CD8-positive, alpha-beta T cell (primary cell): ENCODE measurements at regions of chr19 and their contacts with region 1.

Region 1: DNA sequence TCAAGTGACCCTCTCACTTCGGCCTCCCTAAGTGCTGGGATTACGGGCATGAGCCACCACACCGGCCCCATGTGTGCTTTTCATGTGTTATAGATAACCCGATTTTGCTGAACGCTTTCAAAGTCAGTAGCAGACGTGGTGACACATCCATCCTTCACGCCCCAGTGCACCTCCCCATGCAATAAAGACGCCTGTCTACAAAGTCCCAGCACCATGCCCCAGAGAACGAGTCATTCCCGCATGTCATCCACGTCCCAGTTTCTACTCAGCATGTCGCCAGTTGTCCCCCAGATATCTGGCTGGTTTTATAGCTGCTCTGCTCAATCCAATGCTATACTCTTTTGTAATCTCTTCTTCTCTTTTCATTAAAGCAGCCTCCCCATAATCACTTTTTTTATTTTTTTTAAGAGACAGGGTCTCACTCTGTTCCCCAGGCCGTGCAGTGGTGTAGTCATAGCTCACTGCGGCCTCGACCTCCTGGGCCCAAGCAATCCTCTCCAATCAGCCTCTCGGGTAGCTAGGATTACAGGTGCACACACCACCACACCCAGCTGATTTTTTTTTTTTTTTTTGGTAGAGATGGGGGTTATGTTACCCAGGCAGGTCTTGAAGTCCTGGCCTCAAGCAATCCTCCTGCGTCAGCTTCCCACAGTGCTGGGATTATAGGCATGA is 42.5 kb downstream of the DNM2 start:
- DNase-seq: peak in 5 of 9 experiments; percentile 36 to 67 (median 54)
- ATAC-seq: peak; percentile 30
- H3K4me3 ChIP-seq: peak overlapping the region in 1 of 2 experiments; percentile 39
- H3K4me3 Mint-ChIP-seq: peak overlapping the region; percentile 66
- H3K27ac ChIP-seq: peak overlapping the region; percentile 43 to 74
- H3K27ac Mint-ChIP-seq: peak overlapping the region; percentile 95
- H3K4me1 ChIP-seq: peaks cover 81% of the 10 kb centered on the region
- H3K4me1 Mint-ChIP-seq: peaks cover 82% of the 10 kb centered on the region
- H3K27me3 ChIP-seq: no peaks in the 10 kb centered on the region
- H3K27me3 Mint-ChIP-seq: no peaks in the 10 kb centered on the region
- CTCF ChIP-seq: no peak

Region 2: DNA sequence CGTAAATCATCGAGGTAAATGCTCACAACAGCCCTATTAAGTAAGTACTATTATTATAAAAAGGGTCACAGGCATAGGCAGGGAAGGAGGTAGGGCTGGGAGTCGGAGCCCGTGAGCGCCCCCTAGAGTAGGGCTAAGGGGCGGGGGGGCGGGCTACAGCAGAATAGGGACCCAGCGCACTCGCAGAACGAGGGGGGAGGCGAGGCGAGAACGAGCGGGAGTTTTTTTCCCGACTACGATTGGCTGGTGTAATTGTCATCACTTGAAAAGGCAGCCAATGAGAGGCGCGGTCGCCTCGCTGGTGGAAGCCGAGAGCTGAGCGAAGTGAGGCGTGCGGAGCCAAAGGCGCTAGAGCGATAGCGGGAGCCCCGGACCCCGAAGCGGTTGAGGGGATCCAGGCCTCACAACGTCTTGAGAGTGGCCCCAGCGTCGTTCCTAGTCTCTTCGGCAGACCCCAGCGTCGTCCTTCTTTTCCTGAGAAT is 281.5 kb before region 1 on chr19:
- CTCF ChIA-PET with region 1: no interaction called
- POLR2A ChIA-PET with region 1: no interaction called
- intact Hi-C with region 1: no loop called
- DNase-seq: peak; percentile 75 to 96 (median 88)
- ATAC-seq: peak; percentile 97
- H3K4me3 ChIP-seq: peak overlapping the region; percentile 27 to 28
- H3K4me3 Mint-ChIP-seq: peak overlapping the region; percentile 70
- H3K27ac ChIP-seq: no peak overlapping the region
- H3K27ac Mint-ChIP-seq: no peak overlapping the region
- H3K4me1 ChIP-seq: peaks cover 10% of the 10 kb centered on the region
- H3K4me1 Mint-ChIP-seq: peaks cover 14% of the 10 kb centered on the region
- H3K27me3 ChIP-seq: no peaks in the 10 kb centered on the region
- H3K27me3 Mint-ChIP-seq: no peaks in the 10 kb centered on the region
- CTCF ChIP-seq: peak; percentile 74

Region 3: DNA sequence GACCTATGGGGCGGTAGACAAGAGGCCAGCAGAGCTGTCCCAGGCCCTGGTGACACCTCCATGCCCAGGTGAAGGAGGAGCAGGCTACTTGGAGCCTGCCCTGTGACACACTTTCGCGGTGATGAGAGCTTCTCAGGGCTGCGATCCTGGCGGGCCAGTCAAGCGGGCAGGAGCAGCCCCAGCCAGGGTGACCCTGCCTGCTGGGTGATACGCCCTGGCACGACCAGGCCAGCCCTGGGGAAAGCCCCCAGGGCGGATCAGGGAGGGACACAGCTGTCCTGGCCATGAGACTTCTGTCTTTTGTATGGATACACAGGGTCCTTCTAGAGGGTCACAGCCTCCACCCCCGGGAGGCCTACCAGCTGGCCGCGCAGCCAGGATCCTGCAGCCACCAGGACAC is 29.5 kb before region 1 on chr19:
- CTCF ChIA-PET with region 1: interaction called, 5 read pairs
- POLR2A ChIA-PET with region 1: interaction called, 9 read pairs
- intact Hi-C with region 1: loop called (anchors 1 to 2 kb)
- DNase-seq: peak in 2 of 9 experiments; percentile 37 to 46
- ATAC-seq: no peak
- H3K4me3 ChIP-seq: no peak overlapping the region
- H3K4me3 Mint-ChIP-seq: peak overlapping the region; percentile 12
- H3K27ac ChIP-seq: peak overlapping the region; percentile 32 to 73
- H3K27ac Mint-ChIP-seq: peak overlapping the region; percentile 98
- H3K4me1 ChIP-seq: peaks cover 35% of the 10 kb centered on the region
- H3K4me1 Mint-ChIP-seq: peaks cover 56% of the 10 kb centered on the region
- H3K27me3 ChIP-seq: no peaks in the 10 kb centered on the region
- H3K27me3 Mint-ChIP-seq: no peaks in the 10 kb centered on the region
- CTCF ChIP-seq: no peak

Region 4: DNA sequence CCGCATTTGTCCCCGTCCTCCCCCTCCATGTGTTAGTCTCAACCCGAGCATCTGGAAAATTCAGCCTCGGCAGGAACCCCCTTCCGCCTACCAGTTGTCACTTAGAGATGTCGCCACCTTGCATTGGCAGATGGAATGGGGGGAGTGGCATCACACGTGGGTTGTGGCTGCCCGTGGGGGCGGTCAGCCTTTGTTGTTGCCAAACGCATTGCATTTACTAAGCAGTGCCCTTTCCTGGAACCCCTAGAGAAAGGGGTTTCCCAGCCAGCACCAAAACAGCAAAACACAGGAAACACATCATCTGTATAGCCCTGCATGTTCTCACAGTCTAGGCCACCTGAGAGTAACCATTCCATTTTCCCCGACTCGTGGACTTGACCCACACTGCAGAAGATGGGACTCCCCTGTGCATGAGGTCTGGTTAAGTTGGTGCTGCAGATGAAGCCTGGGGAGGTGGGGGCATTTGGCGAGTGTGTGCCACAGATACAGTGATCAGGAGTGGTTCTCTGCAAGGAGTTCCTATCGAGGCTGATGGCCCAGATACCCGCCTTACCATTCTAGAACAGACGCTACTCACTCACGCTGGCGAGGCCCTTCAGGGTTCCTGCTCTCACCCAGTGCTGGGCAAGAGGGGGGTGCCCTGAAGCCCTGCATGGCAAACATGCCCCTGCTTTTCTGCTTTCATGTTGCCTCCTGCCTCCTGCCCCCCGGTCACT is 37.3 kb after region 1 on chr19:
- CTCF ChIA-PET with region 1: no interaction called
- POLR2A ChIA-PET with region 1: no interaction called
- intact Hi-C with region 1: loop called (anchors 1 to 2 kb)
- DNase-seq: peak; percentile 64 to 97 (median 80)
- ATAC-seq: peak; percentile 81
- H3K4me3 ChIP-seq: peak overlapping the region; percentile 31 to 42
- H3K4me3 Mint-ChIP-seq: peak overlapping the region; percentile 76
- H3K27ac ChIP-seq: peak overlapping the region; percentile 81 to 96
- H3K27ac Mint-ChIP-seq: peak overlapping the region; percentile 98
- H3K4me1 ChIP-seq: peaks cover 35% of the 10 kb centered on the region
- H3K4me1 Mint-ChIP-seq: peaks cover 21% of the 10 kb centered on the region
- H3K27me3 ChIP-seq: no peaks in the 10 kb centered on the region
- H3K27me3 Mint-ChIP-seq: no peaks in the 10 kb centered on the region
- CTCF ChIP-seq: no peak

Region 5: DNA sequence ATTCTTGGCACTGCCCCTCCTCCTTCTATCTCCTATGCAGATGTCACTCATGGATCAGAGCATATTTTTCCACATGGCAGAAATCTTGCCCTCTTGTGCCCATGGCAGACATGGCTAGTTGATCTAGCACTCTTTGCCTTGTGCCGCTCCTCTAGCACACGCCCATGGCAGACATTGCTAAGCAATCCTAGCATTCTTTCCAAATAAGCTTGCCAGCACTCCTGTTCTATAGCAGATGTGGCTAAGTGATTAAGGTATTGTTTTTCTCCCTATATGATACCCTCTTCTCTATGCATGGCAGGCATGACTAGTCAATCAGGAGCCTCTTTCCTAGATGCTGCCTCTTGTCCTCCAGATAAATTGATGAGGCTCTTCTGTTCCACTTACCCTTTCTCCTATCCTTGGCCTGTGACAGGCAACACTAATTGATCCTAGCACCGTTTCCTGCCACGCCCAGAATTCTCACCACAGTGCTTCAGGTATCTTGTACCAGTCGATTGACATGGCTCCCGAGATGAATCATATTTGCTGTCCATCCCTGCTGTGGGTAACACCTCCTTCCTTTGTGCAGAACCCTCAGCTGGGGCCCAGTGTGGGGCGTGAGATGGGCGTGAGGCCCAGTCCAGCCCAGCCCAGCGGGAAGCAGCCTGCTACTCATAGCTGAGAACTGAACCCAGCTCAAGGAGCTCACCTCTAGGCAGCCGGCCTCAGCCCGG is 48.7 kb after region 1 on chr19:
- CTCF ChIA-PET with region 1: no interaction called
- POLR2A ChIA-PET with region 1: no interaction called
- intact Hi-C with region 1: no loop called
- DNase-seq: peak in 4 of 9 experiments; percentile 20 to 53 (median 34)
- ATAC-seq: peak; percentile 58
- H3K4me3 ChIP-seq: no peak overlapping the region
- H3K4me3 Mint-ChIP-seq: no peak overlapping the region
- H3K27ac ChIP-seq: no peak overlapping the region
- H3K27ac Mint-ChIP-seq: peak overlapping the region; percentile 56
- H3K4me1 ChIP-seq: peaks cover 9% of the 10 kb centered on the region
- H3K4me1 Mint-ChIP-seq: peaks cover 18% of the 10 kb centered on the region
- H3K27me3 ChIP-seq: no peaks in the 10 kb centered on the region
- H3K27me3 Mint-ChIP-seq: no peaks in the 10 kb centered on the region
- CTCF ChIP-seq: no peak